MCF 10A (cell line): ENCODE measurements at regions of chr17 and their contacts with region 1.

Region 1: GRCh38 chr17:996554-997344 is at the start of gene TIMM22:
- DNase-seq: peak; percentile 98
- H3K4me3 Mint-ChIP-seq: peak within 1 kb of the TSS; percentile 95
- H3K27ac Mint-ChIP-seq: peak within 1 kb of the TSS; percentile 94
- H3K4me1 Mint-ChIP-seq: peaks cover 19% of the 10 kb centered on the region
- H3K27me3 Mint-ChIP-seq: no peaks in the 10 kb centered on the region
- CTCF ChIP-seq: peak; percentile 92
- total RNA-seq, gene TIMM22: 16.6 and 18.5 TPM in 2 replicates

Region 2: DNA sequence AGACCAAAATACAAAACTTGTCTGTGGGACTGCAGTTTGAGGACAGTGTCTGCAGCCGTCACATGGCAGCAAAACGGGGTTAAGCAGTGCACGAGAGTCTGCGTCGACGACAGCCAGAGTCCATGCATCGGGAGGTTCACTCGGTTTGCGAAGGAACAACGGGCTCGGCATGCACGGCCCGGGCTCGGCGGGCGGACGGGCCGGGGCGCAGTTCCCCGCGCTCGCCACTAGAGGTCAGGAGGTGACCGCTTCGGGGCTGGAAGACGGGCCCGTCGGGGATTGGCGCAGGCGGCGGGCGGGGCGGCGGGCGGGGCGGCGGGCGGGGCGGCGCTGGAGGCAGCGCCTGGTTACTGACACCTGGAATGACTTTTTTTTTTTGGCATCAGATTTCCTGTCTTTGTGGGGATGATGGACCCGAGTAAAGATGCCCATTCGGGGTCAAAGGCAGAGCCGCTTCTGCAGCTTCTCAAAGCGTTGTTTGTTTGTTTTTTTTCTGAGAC is 852.9 kb before region 1 on chr17:
- CTCF ChIA-PET with region 1: interaction called, 5 read pairs
- POLR2A ChIA-PET with region 1: no interaction called
- intact Hi-C with region 1: loop called (anchors 5 kb)
- DNase-seq: peak; percentile 68
- H3K4me3 Mint-ChIP-seq: no peak overlapping the region
- H3K27ac Mint-ChIP-seq: no peak overlapping the region
- H3K4me1 Mint-ChIP-seq: no peaks in the 10 kb centered on the region
- H3K27me3 Mint-ChIP-seq: peaks cover 11% of the 10 kb centered on the region
- CTCF ChIP-seq: peak; percentile 97

Region 3: DNA sequence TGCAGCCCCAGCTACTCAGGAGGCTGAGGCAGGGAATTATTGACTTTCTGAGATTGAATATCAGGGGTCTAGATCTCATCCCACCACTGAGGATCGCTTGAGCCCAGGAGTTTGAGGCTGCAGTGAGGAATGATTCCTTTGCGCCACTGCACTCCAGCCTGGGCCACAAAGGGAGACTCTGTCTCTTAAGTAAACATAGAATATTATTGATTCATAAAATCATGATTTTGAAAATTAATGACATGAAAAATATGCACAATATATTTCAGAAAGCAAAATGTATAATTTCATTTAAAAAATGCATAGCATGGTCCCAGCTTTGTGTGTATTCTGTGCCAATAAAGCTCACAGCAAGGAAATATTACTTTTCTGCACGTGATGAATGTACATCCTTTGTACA is 280.5 kb before region 1 on chr17:
- CTCF ChIA-PET with region 1: interaction called, 3 read pairs
- POLR2A ChIA-PET with region 1: interaction called, 28 read pairs
- intact Hi-C with region 1: no loop called
- DNase-seq: no peak
- H3K4me3 Mint-ChIP-seq: no peak overlapping the region
- H3K27ac Mint-ChIP-seq: no peak overlapping the region
- H3K4me1 Mint-ChIP-seq: peaks cover 14% of the 10 kb centered on the region
- H3K27me3 Mint-ChIP-seq: no peaks in the 10 kb centered on the region
- CTCF ChIP-seq: no peak

Region 4: DNA sequence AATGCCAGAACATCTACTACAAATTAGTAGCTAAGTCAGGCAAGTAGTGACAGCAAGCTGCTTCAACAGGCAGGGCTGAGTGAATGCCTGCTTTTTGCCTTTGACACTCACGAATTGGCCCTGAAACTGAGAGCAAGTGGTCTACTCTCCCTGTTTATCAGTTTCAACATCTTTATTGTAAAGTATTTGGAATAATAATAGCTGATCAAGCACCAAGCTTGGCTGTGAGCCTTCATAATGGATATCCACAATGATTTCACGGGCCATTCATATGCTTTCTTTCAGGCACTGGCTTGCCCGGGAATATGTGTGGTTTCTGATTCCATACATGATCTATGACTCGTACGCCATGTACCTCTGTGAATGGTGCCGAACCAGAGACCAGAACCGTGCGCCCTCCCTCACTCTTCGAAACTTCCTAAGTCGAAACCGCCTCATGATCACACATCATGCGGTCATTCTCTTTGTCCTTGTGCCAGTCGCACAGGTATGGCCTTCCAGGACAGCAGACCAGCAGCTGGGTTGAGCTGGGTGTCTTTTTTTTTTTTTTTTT is 259.1 kb before region 1 on chr17:
- CTCF ChIA-PET with region 1: interaction called, 10 read pairs
- POLR2A ChIA-PET with region 1: interaction called, 3 read pairs
- intact Hi-C with region 1: no loop called
- DNase-seq: no peak
- H3K4me3 Mint-ChIP-seq: no peak overlapping the region
- H3K27ac Mint-ChIP-seq: peak overlapping the region; percentile 61
- H3K4me1 Mint-ChIP-seq: peaks cover 11% of the 10 kb centered on the region
- H3K27me3 Mint-ChIP-seq: no peaks in the 10 kb centered on the region
- CTCF ChIP-seq: no peak

Region 5: DNA sequence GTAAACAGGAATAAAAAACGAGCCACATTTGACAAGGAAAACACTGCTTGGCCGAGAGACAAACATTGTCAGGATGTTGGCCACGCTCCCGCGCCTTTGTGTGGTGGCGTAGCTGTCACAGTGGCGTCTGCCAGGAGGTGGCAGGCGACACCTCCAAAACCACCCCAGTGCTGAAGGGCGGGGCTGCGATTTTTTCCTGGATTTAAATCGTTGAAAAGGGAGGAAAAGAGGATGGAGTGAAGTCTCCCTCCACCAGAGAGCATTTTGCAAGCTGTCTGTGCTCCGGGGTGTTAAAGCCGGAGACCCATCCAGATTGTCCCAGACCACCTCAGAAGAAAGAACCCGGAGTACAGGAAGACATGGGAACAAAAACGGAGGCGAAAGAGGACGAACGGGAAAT is 201.9 kb before region 1 on chr17:
- CTCF ChIA-PET with region 1: interaction called, 11 read pairs
- POLR2A ChIA-PET with region 1: interaction called, 6 read pairs
- intact Hi-C with region 1: no loop called
- DNase-seq: peak; percentile 58
- H3K4me3 Mint-ChIP-seq: no peak overlapping the region
- H3K27ac Mint-ChIP-seq: no peak overlapping the region
- H3K4me1 Mint-ChIP-seq: peaks cover 6% of the 10 kb centered on the region
- H3K27me3 Mint-ChIP-seq: no peaks in the 10 kb centered on the region
- CTCF ChIP-seq: peak; percentile 70

Region 6: GRCh38 chr17:1055751-1056645 is 59.2 kb after region 1 on chr17:
- CTCF ChIA-PET with region 1: interaction called, 9 read pairs
- POLR2A ChIA-PET with region 1: interaction called, 4 read pairs
- intact Hi-C with region 1: loop called (anchors 2 kb)
- DNase-seq: peak; percentile 51
- H3K4me3 Mint-ChIP-seq: no peak overlapping the region
- H3K27ac Mint-ChIP-seq: no peak overlapping the region
- H3K4me1 Mint-ChIP-seq: peaks cover 8% of the 10 kb centered on the region
- H3K27me3 Mint-ChIP-seq: no peaks in the 10 kb centered on the region
- CTCF ChIP-seq: peak; percentile 63

Region 7: GRCh38 chr17:1216217-1217088 is 219.7 kb after region 1 on chr17:
- CTCF ChIA-PET with region 1: no interaction called
- POLR2A ChIA-PET with region 1: no interaction called
- intact Hi-C with region 1: no loop called
- DNase-seq: no peak
- H3K4me3 Mint-ChIP-seq: no peak overlapping the region
- H3K27ac Mint-ChIP-seq: no peak overlapping the region
- H3K4me1 Mint-ChIP-seq: no peaks in the 10 kb centered on the region
- H3K27me3 Mint-ChIP-seq: peaks cover 42% of the 10 kb centered on the region
- CTCF ChIP-seq: no peak